Heart left ventricle (tissue), 16 donors: ENCODE measurements at regions of chr1 and their contacts with region 1.

Region 1: DNA sequence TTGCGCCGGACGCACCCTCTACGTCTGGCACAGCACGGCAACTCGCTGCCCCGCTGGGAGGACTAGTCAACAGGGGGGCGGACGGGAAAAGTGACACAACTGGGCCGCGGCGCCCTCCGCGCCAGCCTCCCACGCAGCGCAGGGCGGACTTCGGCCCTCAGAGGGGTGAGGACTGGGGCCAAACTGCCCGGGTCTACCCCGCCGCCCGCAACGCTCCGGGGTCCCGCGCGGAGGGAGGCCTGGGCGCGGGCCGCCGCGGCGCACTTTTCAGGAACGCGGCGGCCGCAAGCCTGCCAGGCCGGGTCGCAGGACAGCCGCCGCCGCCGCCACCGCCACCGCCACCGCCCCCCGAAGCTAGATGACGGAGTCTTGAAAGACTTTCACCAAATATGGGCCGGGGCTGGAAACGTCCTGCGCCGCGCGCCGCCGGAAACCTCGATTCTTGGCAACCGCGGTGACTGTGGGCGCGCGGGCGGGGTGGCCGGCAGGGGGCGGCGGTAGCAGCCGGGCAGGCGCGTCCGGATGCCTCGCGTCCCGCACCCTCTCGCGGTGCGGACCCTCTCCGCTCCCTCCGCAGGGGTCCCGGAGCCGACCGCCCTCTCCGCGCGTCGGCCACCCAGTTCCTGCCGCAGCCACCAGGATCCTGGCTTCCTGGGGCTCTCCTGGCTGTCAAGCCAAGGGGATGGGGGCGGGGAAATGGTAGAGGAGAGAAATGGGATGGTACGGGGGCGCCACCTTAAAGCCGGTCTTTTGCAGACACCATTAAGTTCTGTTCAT is 3.7 kb upstream of the CCN1 start:
- DNase-seq: peak; percentile 90 to 93 (median 91)
- ATAC-seq: peak; percentile 24 to 74 (median 54)
- H3K4me3 ChIP-seq: peak overlapping the region; percentile 47 to 97 (median 78)
- H3K27ac ChIP-seq: peak overlapping the region; percentile 93 to 100 (median 97)
- H3K4me1 ChIP-seq: peaks cover 0 to 41% (median 15%) of the 10 kb centered on the region in 12 donors
- H3K27me3 ChIP-seq: peaks cover 0 to 46% (median 0%) of the 10 kb centered on the region in 9 donors
- CTCF ChIP-seq: peak; percentile 58 to 89 (median 80)
- POLR2A ChIP-seq: peak in 1 of 2 donors; percentile 80

Region 2: GRCh38 chr1:85307987-85308832 is 268.6 kb before region 1 on chr1:
- intact Hi-C with region 1: loop called in 9 of 10 experiments (anchors 2 to 5 kb)
- DNase-seq: peak; percentile 87 to 92 (median 88)
- ATAC-seq: peak; percentile 94 to 99 (median 97)
- H3K4me3 ChIP-seq: peak overlapping the region in 1 of 12 donors; percentile 3
- H3K27ac ChIP-seq: no peak overlapping the region
- H3K4me1 ChIP-seq: peaks cover 0 to 13% (median 7%) of the 10 kb centered on the region in 12 donors
- H3K27me3 ChIP-seq: peaks cover 0 to 11% (median 0%) of the 10 kb centered on the region in 9 donors
- CTCF ChIP-seq: peak; percentile 87 to 100 (median 99)
- POLR2A ChIP-seq: no peak

Region 3: DNA sequence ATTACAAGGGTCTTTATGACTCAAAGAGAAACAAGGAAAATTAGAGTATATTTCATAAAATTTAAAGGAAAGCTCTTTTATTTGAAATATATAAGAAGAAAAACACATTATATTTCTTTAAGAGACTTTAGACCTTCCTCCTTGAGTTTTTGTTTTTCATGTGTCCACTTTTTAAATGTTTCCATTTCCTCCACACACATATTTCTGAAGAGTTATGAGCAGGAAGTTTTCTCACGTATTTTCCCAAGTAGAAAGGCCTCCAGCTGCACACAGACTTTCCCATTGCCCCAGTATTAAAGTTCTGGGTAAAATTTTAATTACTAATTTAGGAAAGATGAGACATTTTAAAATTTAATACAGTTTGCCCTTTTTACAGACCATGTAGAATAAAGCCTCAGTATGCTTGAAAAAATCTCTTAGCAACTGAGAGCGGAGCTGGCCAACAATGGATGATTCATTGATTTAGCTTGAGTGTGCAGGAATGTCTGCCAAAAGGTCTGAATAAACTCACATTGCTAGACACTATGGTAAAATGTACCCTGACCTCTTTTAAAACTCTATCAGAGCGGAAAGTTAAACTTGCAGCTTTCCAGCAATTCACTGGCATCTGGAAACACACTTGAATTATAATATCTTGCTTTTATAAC is 169.8 kb before region 1 on chr1:
- intact Hi-C with region 1: loop called in 4 of 10 experiments (anchors 5 to 10 kb)
- DNase-seq: peak in 4 of 5 donors; percentile 28 to 42 (median 39)
- ATAC-seq: peak; percentile 57 to 91 (median 87)
- H3K4me3 ChIP-seq: peak overlapping the region in 2 of 12 donors; percentile 0 to 15
- H3K27ac ChIP-seq: peak overlapping the region in 9 of 12 donors; percentile 7 to 65 (median 55)
- H3K4me1 ChIP-seq: peaks cover 0 to 30% (median 8%) of the 10 kb centered on the region in 12 donors
- H3K27me3 ChIP-seq: no peaks in the 10 kb centered on the region
- CTCF ChIP-seq: no peak
- POLR2A ChIP-seq: no peak

Region 4: DNA sequence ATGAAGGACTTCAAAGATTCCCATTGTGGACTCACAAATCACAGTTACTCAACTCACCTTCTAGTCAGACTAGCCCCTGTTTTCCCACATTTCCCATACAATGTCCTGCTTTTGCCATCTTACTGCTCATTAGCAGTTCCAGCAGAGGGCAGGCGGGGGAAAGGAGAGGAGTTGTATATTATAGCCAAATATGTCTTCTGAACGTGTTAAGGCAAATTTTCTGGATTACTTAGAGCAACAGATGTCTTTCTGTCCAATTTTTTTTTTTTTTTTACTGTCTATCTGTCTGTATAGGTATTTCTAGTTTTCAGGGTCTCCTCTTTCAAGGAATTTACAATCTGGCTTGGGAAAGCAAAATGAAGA is 81.9 kb before region 1 on chr1:
- intact Hi-C with region 1: loop called in 5 of 10 experiments (anchors 2 to 5 kb)
- DNase-seq: peak in 1 of 5 donors; percentile 11
- ATAC-seq: peak in 2 of 4 donors; percentile 36 to 61
- H3K4me3 ChIP-seq: no peak overlapping the region
- H3K27ac ChIP-seq: no peak overlapping the region
- H3K4me1 ChIP-seq: no peaks in the 10 kb centered on the region
- H3K27me3 ChIP-seq: no peaks in the 10 kb centered on the region
- CTCF ChIP-seq: peak in 10 of 12 donors; percentile 4 to 46 (median 34)
- POLR2A ChIP-seq: no peak

Region 5: DNA sequence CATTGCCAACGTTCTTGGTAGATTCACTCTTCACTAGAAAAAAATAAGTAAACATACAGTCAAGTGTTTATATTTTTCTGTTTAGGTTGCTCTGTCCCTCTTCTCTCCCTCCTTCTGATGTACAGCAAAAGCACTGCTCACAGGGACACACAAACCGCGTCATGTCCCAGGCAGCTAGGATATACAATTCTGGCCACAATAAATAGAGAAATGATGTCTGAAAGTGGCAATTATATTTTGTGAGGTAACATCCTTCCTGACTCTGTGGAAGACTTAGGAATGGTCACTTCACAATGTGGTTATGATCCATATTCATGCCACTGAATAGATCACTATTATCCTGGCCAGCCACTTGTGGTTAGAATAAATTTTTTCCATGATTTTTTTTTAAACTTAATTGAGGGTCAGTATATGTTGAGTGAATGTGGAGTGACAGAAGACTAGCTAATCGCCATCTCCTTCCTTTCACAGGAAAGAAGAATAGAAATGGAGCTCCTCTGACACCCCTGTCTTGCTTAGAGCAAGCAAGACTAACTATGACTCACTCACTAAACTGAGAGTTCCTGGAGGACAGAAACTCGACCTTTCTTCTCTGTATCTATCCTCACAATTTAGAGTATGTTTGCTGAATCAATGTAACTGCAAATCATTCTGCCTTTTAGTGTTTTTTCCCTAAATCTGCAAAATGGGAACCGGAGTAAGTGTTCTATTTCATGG is 77.4 kb after region 1 on chr1:
- intact Hi-C with region 1: loop called in 1 of 10 experiments (anchors 10 kb)
- DNase-seq: no peak
- ATAC-seq: no peak
- H3K4me3 ChIP-seq: no peak overlapping the region
- H3K27ac ChIP-seq: no peak overlapping the region
- H3K4me1 ChIP-seq: no peaks in the 10 kb centered on the region
- H3K27me3 ChIP-seq: no peaks in the 10 kb centered on the region
- CTCF ChIP-seq: no peak
- POLR2A ChIP-seq: no peak

Region 6: DNA sequence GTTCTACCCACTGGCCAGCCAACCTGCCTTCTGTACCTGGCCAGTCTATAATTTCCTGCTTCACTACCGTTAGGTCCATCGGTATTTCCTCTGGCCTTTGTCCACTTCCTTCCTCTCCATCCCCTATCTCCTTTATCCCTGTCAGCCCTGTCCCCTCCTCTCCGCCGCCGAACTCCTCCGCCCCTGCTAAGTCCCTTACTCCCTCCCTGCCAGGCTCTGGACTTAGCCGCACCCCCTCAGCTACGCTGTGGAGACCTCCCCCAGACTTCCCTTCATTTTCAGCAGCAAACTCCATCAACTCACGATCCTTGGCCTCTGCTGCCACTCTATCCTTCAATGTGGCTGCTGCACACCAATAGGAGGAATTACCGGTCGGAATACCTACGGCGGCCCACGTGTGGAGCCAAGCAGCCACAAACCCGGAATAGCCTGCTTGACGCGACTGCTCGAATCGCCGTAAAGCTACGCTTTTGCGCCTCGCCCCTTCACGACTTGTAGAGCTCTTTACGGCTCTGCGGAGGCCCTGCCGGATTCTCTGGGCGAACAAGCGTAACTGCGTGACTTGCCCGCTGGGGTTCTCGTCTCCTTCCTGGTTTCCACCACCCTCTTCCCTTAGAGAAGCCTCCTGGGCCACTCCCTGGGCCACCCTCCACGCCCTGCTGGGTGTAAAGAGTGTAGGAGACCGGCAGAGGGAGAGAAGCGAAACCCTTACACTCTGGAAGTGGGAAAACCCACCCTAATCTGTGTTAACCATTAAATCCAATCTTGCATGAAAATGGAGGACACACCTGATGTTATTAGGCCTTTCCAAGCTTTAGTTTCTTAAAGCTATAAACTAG is 131.4 kb after region 1 on chr1 and contains the start of gene ZNHIT6:
- intact Hi-C with region 1: loop called in 3 of 10 experiments (anchors 5 kb)
- DNase-seq: peak; percentile 89 to 95 (median 90)
- ATAC-seq: peak; percentile 95 to 98 (median 98)
- H3K4me3 ChIP-seq: peak within 1 kb of the TSS; percentile 56 to 92 (median 80)
- H3K27ac ChIP-seq: peak within 1 kb of the TSS; percentile 53 to 93 (median 86)
- H3K4me1 ChIP-seq: peaks cover 0 to 24% (median 14%) of the 10 kb centered on the region in 12 donors
- H3K27me3 ChIP-seq: no peaks in the 10 kb centered on the region
- CTCF ChIP-seq: peak in 9 of 12 donors; percentile 14 to 50 (median 32)
- POLR2A ChIP-seq: peak in 1 of 2 donors; percentile 58
- total RNA-seq, gene ZNHIT6: 7.1 to 12.8 (median 9.9) TPM